ENCODE measurements at regions of chr20 and their contacts with region 1.

Region 1: GRCh38 chr20:34129518-34130162 is 17.6 kb upstream of the EIF2S2 start:
- DNase-seq: peak; percentile 36 to 79 (median 67)
- ATAC-seq: peak; percentile 99
- H3K4me3 ChIP-seq: no peak overlapping the region
- H3K4me3 Mint-ChIP-seq: peak overlapping the region in 8 of 10 donors; percentile 18 to 73 (median 46)
- H3K27ac ChIP-seq: no peak overlapping the region
- H3K27ac Mint-ChIP-seq: no peak overlapping the region
- H3K4me1 ChIP-seq: no peaks in the 10 kb centered on the region
- H3K4me1 Mint-ChIP-seq: peaks cover 0 to 8% (median 4%) of the 10 kb centered on the region in 7 donors
- H3K27me3 ChIP-seq: no peaks in the 10 kb centered on the region
- H3K27me3 Mint-ChIP-seq: peaks cover 0 to 23% (median 7%) of the 10 kb centered on the region in 5 donors

Region 2: DNA sequence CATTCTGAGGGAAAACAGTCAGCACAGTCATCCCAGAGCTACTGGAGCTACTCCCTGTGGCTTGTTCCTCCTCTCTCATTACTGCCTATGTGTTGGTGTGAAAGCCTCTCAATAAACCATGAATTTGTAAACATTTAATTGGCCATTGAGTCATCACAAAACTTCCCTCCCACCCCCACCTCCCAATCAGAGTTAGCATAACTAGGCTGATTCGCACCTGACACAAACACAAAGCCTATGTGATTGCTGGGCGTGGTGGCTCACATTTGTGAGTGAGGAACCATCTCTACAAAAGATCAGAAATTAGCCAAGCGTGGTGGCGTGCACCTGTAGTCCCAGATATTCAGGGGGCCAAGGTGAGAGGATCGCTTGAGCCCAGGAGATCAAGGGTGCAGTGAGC is 668.9 kb before region 1 on chr20:
- CTCF ChIA-PET with region 1: no interaction called
- POLR2A ChIA-PET with region 1: no interaction called
- intact Hi-C with region 1: loop called in 1 of 2 experiments (anchors 5 kb)
- DNase-seq: no peak
- ATAC-seq: no peak
- H3K4me3 ChIP-seq: no peak overlapping the region
- H3K4me3 Mint-ChIP-seq: no peak overlapping the region
- H3K27ac ChIP-seq: no peak overlapping the region
- H3K27ac Mint-ChIP-seq: no peak overlapping the region
- H3K4me1 ChIP-seq: no peaks in the 10 kb centered on the region
- H3K4me1 Mint-ChIP-seq: peaks cover 0 to 4% (median 0%) of the 10 kb centered on the region in 7 donors
- H3K27me3 ChIP-seq: no peaks in the 10 kb centered on the region
- H3K27me3 Mint-ChIP-seq: no peaks in the 10 kb centered on the region

Region 3: GRCh38 chr20:33791959-33792597 is 337.6 kb before region 1 on chr20:
- CTCF ChIA-PET with region 1: interaction called, 5 read pairs
- POLR2A ChIA-PET with region 1: no interaction called
- intact Hi-C with region 1: loop called in 1 of 2 experiments (anchors 1 kb)
- DNase-seq: peak in 8 of 9 donors; percentile 23 to 67 (median 41)
- ATAC-seq: peak; percentile 74
- H3K4me3 ChIP-seq: no peak overlapping the region
- H3K4me3 Mint-ChIP-seq: no peak overlapping the region
- H3K27ac ChIP-seq: no peak overlapping the region
- H3K27ac Mint-ChIP-seq: no peak overlapping the region
- H3K4me1 ChIP-seq: peaks cover 0 to 9% of the 10 kb centered on the region in 2 donors
- H3K4me1 Mint-ChIP-seq: peaks cover 0 to 18% (median 4%) of the 10 kb centered on the region in 7 donors
- H3K27me3 ChIP-seq: no peaks in the 10 kb centered on the region
- H3K27me3 Mint-ChIP-seq: no peaks in the 10 kb centered on the region

Region 4: GRCh38 chr20:33862709-33863403 is 266.8 kb before region 1 on chr20:
- CTCF ChIA-PET with region 1: interaction called, 3 read pairs
- POLR2A ChIA-PET with region 1: no interaction called
- intact Hi-C with region 1: loop called in 1 of 2 experiments (anchors 1 kb)
- DNase-seq: peak in 8 of 9 donors; percentile 23 to 58 (median 43)
- ATAC-seq: peak; percentile 64
- H3K4me3 ChIP-seq: no peak overlapping the region
- H3K4me3 Mint-ChIP-seq: no peak overlapping the region
- H3K27ac ChIP-seq: no peak overlapping the region
- H3K27ac Mint-ChIP-seq: no peak overlapping the region
- H3K4me1 ChIP-seq: peaks cover 18 to 26% of the 10 kb centered on the region in 2 donors
- H3K4me1 Mint-ChIP-seq: peaks cover 18 to 31% (median 27%) of the 10 kb centered on the region in 7 donors
- H3K27me3 ChIP-seq: no peaks in the 10 kb centered on the region
- H3K27me3 Mint-ChIP-seq: peaks cover 0 to 3% (median 0%) of the 10 kb centered on the region in 5 donors

Region 5: GRCh38 chr20:33933469-33933909 is 196.2 kb before region 1 on chr20:
- CTCF ChIA-PET with region 1: interaction called, 4 read pairs
- POLR2A ChIA-PET with region 1: no interaction called
- intact Hi-C with region 1: loop called in 1 of 2 experiments (anchors 1 kb)
- DNase-seq: peak; percentile 14 to 62 (median 48)
- ATAC-seq: peak; percentile 71
- H3K4me3 ChIP-seq: no peak overlapping the region
- H3K4me3 Mint-ChIP-seq: no peak overlapping the region
- H3K27ac ChIP-seq: peak overlapping the region; percentile 13
- H3K27ac Mint-ChIP-seq: peak overlapping the region in 1 of 9 donors; percentile 27
- H3K4me1 ChIP-seq: no peaks in the 10 kb centered on the region
- H3K4me1 Mint-ChIP-seq: peaks cover 0 to 2% (median 0%) of the 10 kb centered on the region in 7 donors
- H3K27me3 ChIP-seq: no peaks in the 10 kb centered on the region
- H3K27me3 Mint-ChIP-seq: peaks cover 0 to 3% (median 0%) of the 10 kb centered on the region in 5 donors

Region 6: DNA sequence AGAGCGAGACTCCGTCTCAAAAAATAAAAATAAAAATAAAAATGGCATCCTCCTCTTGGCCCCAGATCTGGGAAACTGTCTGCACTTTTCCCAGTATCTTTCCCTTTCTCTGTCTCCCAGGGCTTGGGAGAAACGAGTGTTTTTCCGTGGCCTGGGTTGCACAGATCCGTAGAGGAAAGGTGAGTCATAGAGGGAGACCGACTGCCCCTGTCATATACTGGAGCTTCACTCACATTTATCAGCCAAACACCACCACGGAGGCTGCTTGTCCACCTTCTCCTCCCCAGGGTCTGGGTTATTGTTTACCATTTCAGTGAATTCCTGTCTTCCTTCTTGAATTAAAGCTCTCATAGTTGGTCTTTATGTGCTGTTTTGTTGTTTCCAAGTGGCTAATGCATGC is 14.3 kb after region 1 on chr20:
- CTCF ChIA-PET with region 1: no interaction called
- POLR2A ChIA-PET with region 1: no interaction called
- intact Hi-C with region 1: no loop called
- DNase-seq: no peak
- ATAC-seq: no peak
- H3K4me3 ChIP-seq: no peak overlapping the region
- H3K4me3 Mint-ChIP-seq: no peak overlapping the region
- H3K27ac ChIP-seq: no peak overlapping the region
- H3K27ac Mint-ChIP-seq: no peak overlapping the region
- H3K4me1 ChIP-seq: no peaks in the 10 kb centered on the region
- H3K4me1 Mint-ChIP-seq: peaks cover 0 to 4% (median 0%) of the 10 kb centered on the region in 7 donors
- H3K27me3 ChIP-seq: no peaks in the 10 kb centered on the region
- H3K27me3 Mint-ChIP-seq: peaks cover 0 to 22% (median 12%) of the 10 kb centered on the region in 5 donors

Measured in naive thymus-derived CD4-positive, alpha-beta T cell (primary cell).